Panc1 (cell line): ENCODE measurements at regions of chr2 and their contacts with region 1.

Region 1: GRCh38 chr2:207103132-207103531 is 62.6 kb downstream of the KLF7 start:
- DNase-seq: no peak
- ATAC-seq: no peak
- H3K4me3 ChIP-seq: no peak overlapping the region
- H3K27ac ChIP-seq: no peak overlapping the region
- H3K4me1 ChIP-seq: no peaks in the 10 kb centered on the region
- H3K27me3 ChIP-seq: no peaks in the 10 kb centered on the region
- CTCF ChIP-seq: no peak

Region 2: DNA sequence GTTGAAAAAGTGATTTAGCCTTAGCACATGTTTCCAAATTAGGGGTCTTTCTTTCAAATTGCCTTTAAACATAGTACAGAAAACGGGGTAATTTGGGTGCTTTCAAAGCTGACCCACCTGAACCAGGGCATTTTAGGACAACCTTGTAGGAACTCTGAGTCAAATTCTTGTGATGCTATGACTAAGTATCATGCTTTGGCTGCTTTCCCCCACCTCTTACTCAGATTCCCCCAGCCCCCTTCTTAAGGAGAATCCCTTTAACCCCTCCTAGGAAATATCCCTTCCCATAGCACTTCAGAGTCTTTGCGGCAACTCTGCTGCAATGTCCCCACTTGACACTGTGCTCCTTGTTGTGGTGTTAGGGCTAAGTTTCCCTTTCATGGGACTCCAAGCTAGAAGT is 81.2 kb after region 1 on chr2:
- CTCF ChIA-PET with region 1: no interaction called
- POLR2A ChIA-PET with region 1: interaction called, 11 read pairs
- in situ Hi-C with region 1: no loop called
- intact Hi-C with region 1: no loop called
- DNase-seq: no peak
- ATAC-seq: no peak
- H3K4me3 ChIP-seq: no peak overlapping the region
- H3K27ac ChIP-seq: no peak overlapping the region
- H3K4me1 ChIP-seq: no peaks in the 10 kb centered on the region
- H3K27me3 ChIP-seq: no peaks in the 10 kb centered on the region
- CTCF ChIP-seq: no peak